ENCODE measurements at regions of chr6 and their contacts with region 1.

Region 1: GRCh38 chr6:137233911-137234863 is 15.0 kb upstream of the IFNGR1 start:
- DNase-seq: peak; percentile 12
- H3K4me3 Mint-ChIP-seq: peak overlapping the region; percentile 25
- H3K27ac Mint-ChIP-seq: peak overlapping the region; percentile 50
- H3K4me1 Mint-ChIP-seq: peaks cover 59% of the 10 kb centered on the region
- H3K27me3 Mint-ChIP-seq: peaks cover 8% of the 10 kb centered on the region

Region 2: DNA sequence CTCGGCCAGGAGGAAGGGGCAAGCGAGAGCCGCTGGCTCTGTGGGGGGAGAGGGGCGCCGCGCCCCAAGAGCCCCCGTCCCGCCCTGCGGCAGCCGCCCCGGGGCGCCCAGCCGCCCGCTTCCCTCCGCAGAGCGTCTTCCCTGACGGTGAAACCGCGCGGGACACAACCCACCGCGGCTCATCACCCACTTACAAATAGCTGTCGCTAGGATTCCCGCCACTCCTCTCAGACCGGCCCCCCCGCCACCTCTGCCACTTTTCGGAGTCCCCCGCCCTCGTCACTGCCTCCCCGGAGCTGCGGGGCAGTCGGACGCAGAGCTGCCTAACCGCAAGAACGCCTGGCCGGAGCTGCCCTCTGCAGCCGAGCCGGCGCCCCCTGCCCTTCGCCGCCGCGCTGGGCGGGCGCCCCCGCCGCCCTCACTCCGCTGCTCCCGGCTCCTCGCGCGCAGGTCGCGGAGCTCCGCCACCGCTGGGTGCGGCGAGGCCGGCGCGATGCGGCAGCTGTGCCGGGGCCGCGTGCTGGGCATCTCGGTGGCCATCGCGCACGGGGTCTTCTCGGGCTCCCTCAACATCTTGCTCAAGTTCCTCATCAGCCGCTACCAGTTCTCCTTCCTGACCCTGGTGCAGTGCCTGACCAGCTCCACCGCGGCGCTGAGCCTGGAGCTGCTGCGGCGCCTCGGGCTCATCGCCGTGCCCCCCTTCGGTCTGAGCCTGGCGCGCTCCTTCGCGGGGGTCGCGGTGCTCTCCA is 312.1 kb before region 1 on chr6 and contains the start of gene SLC35D3:
- intact Hi-C with region 1: no loop called
- DNase-seq: no peak
- H3K4me3 Mint-ChIP-seq: peak within 1 kb of the TSS; percentile 75
- H3K27ac Mint-ChIP-seq: no peak within 1 kb of the TSS
- H3K4me1 Mint-ChIP-seq: peaks cover 15% of the 10 kb centered on the region
- H3K27me3 Mint-ChIP-seq: peaks cover 62% of the 10 kb centered on the region
- total RNA-seq, gene SLC35D3: not detected in 2 replicates

Region 3: GRCh38 chr6:137033828-137034227 is 200.4 kb before region 1 on chr6:
- intact Hi-C with region 1: loop called (anchors 5 kb)
- DNase-seq: peak; percentile 61
- H3K4me3 Mint-ChIP-seq: no peak overlapping the region
- H3K27ac Mint-ChIP-seq: peak overlapping the region; percentile 20
- H3K4me1 Mint-ChIP-seq: peaks cover 19% of the 10 kb centered on the region
- H3K27me3 Mint-ChIP-seq: peaks cover 54% of the 10 kb centered on the region

Region 4: DNA sequence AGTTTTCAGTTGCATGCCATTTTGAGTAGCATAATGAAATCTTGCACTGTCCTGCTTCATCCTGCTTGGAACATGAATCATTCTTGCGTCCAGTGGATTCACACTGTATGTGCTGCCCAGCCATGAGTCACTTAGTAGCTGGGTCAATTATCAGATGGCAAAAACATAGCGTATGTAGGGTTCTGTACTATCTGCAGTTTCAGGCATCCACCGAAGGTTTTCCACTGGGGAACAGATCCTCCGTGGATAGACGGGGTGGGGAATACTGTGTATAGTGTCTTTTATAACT is 122.2 kb before region 1 on chr6:
- intact Hi-C with region 1: no loop called
- DNase-seq: no peak
- H3K4me3 Mint-ChIP-seq: no peak overlapping the region
- H3K27ac Mint-ChIP-seq: no peak overlapping the region
- H3K4me1 Mint-ChIP-seq: no peaks in the 10 kb centered on the region
- H3K27me3 Mint-ChIP-seq: peaks cover 6% of the 10 kb centered on the region

Region 5: DNA sequence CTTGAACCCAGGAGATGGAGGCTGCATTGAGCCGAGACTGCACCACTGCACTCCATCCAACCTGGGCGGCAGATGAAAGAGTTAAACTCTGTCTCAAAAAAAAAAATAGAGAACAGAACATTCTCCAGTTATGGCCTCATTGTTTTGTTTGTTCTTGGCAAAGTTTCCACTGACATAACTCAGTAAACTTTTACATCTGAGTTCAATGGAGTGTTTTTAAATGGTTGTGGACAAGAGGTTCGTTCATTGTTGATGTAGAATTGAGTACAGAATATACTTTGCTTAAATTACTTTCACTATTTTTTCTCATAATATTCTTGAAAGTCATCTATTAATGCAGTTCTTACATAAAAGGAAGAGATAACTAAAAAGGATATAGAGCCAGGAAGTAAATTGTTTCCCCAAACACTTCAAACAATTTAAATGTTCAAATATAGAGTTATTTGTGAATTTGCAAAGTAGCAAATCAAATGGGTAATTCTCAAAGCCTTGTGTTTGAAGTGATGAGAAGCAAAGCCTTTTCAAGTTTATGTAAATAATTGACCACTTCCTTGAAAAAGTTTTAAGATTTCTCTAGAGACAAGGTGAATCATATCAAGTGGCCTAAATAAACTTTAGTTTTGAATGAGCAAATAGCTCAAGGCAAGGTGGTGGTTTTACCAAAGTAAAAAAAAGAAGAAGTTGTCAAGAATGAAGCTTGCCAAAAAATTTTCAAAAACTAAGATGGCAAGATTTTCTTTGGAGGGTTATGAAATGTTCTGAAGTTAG is 27.4 kb after region 1 on chr6:
- intact Hi-C with region 1: loop called (anchors 5 kb)
- DNase-seq: no peak
- H3K4me3 Mint-ChIP-seq: no peak overlapping the region
- H3K27ac Mint-ChIP-seq: no peak overlapping the region
- H3K4me1 Mint-ChIP-seq: peaks cover 18% of the 10 kb centered on the region
- H3K27me3 Mint-ChIP-seq: peaks cover 23% of the 10 kb centered on the region

Region 6: GRCh38 chr6:137465378-137466009 is 231.3 kb after region 1 on chr6:
- intact Hi-C with region 1: no loop called
- DNase-seq: no peak
- H3K4me3 Mint-ChIP-seq: no peak overlapping the region
- H3K27ac Mint-ChIP-seq: no peak overlapping the region
- H3K4me1 Mint-ChIP-seq: no peaks in the 10 kb centered on the region
- H3K27me3 Mint-ChIP-seq: peaks cover 16% of the 10 kb centered on the region

Measured in activated T-helper 1 cell treated with anti-CD3 and anti-CD28 coated beads, Interleukin-12 subunit alpha, Interleukin-12 subunit beta, Interleukin-2, Interleukin-4 antibody, amounts not matched to agents 30 ng/mL and 10 ng/mL and 1 ng/mL, durations not matched to agents 14 hours and 24 hours and 36 hours (primary cell).